Heart left ventricle (tissue), 16 donors: ENCODE measurements at regions of chr11 and their contacts with region 1.

Region 1: GRCh38 chr11:2844116-2844842 is 41.3 kb downstream of the CDKN1C start:
- DNase-seq: no peak
- ATAC-seq: no peak
- H3K4me3 ChIP-seq: no peak overlapping the region
- H3K27ac ChIP-seq: no peak overlapping the region
- H3K4me1 ChIP-seq: peaks cover 0 to 6% (median under 1%) of the 10 kb centered on the region in 12 donors
- H3K27me3 ChIP-seq: no peaks in the 10 kb centered on the region
- CTCF ChIP-seq: no peak
- POLR2A ChIP-seq: no peak

Region 2: DNA sequence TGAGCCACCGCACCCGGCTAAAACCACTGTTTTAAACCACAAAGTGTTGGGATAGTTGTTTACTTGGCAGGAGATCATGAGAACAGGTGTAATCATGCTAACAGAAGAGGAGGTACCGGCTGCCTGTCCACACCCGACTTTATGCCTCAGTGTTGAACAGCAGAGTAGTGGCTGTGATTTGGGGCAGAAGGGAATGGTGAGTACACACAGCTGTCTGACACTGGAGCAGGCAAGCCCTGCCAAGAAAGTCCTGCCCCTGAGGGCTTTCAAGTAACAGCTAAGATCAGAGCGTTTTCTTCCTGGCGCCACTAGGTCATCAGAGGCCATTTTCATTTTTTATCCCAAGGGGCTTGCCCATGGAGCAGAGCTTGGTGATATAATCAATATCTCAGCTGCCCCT is 33.2 kb after region 1 on chr11:
- intact Hi-C with region 1: loop called in 2 of 10 experiments (anchors 5 kb)
- DNase-seq: no peak
- ATAC-seq: no peak
- H3K4me3 ChIP-seq: no peak overlapping the region
- H3K27ac ChIP-seq: no peak overlapping the region
- H3K4me1 ChIP-seq: peaks cover 0 to 11% (median 2%) of the 10 kb centered on the region in 12 donors
- H3K27me3 ChIP-seq: peaks cover 0 to 4% (median 0%) of the 10 kb centered on the region in 9 donors
- CTCF ChIP-seq: no peak
- POLR2A ChIP-seq: no peak

Region 3: DNA sequence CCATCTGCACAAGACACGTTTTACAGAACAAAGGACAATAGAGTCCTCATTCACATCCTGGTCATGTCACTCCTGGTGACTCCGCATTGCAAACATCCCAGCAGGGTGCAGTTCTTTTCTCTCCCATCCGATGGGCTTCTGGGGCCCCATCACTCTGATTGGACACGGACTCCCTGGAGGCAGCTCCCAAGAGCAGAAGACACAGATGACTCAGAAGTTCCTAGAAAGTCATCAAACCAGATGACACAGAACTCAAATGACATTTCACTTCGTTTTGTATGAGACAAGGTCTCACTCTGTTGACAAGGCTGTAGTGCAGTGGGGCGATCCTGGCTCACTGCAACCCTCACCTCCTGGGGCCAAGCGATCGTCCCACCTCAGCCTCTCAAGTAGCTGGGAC is 501.4 kb after region 1 on chr11:
- intact Hi-C with region 1: no loop called
- DNase-seq: no peak
- ATAC-seq: no peak
- H3K4me3 ChIP-seq: no peak overlapping the region
- H3K27ac ChIP-seq: no peak overlapping the region
- H3K4me1 ChIP-seq: no peaks in the 10 kb centered on the region
- H3K27me3 ChIP-seq: peaks cover 0 to 19% (median 4%) of the 10 kb centered on the region in 9 donors
- CTCF ChIP-seq: no peak
- POLR2A ChIP-seq: no peak